A673 (cell line): ENCODE measurements at regions of chr9 and their contacts with region 1.

Region 1: DNA sequence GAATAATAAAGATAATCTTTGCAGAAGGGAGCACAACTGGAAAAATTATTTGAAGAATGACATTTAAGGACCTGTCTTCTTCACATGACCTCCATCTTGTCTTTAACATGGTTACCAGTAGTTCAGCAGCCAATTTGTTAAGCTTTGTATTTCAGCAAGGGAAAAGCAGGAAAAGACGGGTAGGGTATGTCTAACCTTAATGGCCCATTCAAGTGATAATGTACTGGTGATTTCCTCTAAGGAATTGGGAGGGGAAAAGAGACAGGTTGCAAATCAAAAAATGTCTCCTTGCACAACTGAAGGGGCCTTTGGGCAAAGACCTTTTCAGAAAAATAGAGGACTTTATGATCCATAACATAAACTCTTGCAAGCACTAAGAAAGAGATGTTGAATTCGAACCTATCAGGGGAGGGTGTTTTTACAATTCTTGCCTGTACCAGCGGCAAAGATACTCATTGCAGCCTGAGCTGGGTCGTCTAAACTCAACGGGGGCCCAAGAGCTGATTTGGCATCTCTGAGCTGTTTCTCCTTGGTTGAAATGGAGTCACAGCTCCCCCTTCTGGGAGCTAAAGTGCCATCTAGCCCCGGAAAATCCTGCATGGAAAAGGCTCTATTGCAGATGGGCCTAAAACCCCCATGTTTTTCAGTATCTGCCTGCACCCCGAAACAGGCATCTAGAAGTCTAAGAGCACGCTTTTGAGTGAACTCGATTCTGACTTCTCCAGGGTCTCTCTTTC is 3.8 kb downstream of the BRINP1 start:
- DNase-seq: peak; percentile 61
- H3K4me3 ChIP-seq: no peak overlapping the region
- H3K27ac ChIP-seq: no peak overlapping the region
- H3K4me1 ChIP-seq: no peaks in the 10 kb centered on the region
- H3K27me3 ChIP-seq: peaks cover 34% of the 10 kb centered on the region
- CTCF ChIP-seq: peak; percentile 56

Region 2: GRCh38 chr9:117644133-117644931 is 1721.1 kb before region 1 on chr9:
- CTCF ChIA-PET with region 1: no interaction called
- POLR2A ChIA-PET with region 1: no interaction called
- intact Hi-C with region 1: loop called (anchors 2 kb)
- DNase-seq: peak; percentile 80
- H3K4me3 ChIP-seq: no peak overlapping the region
- H3K27ac ChIP-seq: no peak overlapping the region
- H3K4me1 ChIP-seq: no peaks in the 10 kb centered on the region
- H3K27me3 ChIP-seq: peaks cover 55% of the 10 kb centered on the region
- CTCF ChIP-seq: peak; percentile 97

Region 3: GRCh38 chr9:117782931-117783788 is 1582.3 kb before region 1 on chr9:
- CTCF ChIA-PET with region 1: no interaction called
- POLR2A ChIA-PET with region 1: no interaction called
- intact Hi-C with region 1: loop called (anchors 5 kb)
- DNase-seq: peak; percentile 79
- H3K4me3 ChIP-seq: peak overlapping the region; percentile 28
- H3K27ac ChIP-seq: no peak overlapping the region
- H3K4me1 ChIP-seq: no peaks in the 10 kb centered on the region
- H3K27me3 ChIP-seq: no peaks in the 10 kb centered on the region
- CTCF ChIP-seq: peak; percentile 87

Region 4: GRCh38 chr9:118170032-118170955 is 1195.2 kb before region 1 on chr9:
- CTCF ChIA-PET with region 1: no interaction called
- POLR2A ChIA-PET with region 1: no interaction called
- intact Hi-C with region 1: loop called (anchors 5 kb)
- DNase-seq: peak; percentile 62
- H3K4me3 ChIP-seq: no peak overlapping the region
- H3K27ac ChIP-seq: no peak overlapping the region
- H3K4me1 ChIP-seq: no peaks in the 10 kb centered on the region
- H3K27me3 ChIP-seq: no peaks in the 10 kb centered on the region
- CTCF ChIP-seq: peak; percentile 71

Region 5: GRCh38 chr9:118522093-118523028 is 843.1 kb before region 1 on chr9:
- CTCF ChIA-PET with region 1: no interaction called
- POLR2A ChIA-PET with region 1: no interaction called
- intact Hi-C with region 1: loop called (anchors 10 kb)
- DNase-seq: peak; percentile 51
- H3K4me3 ChIP-seq: no peak overlapping the region
- H3K27ac ChIP-seq: no peak overlapping the region
- H3K4me1 ChIP-seq: no peaks in the 10 kb centered on the region
- H3K27me3 ChIP-seq: no peaks in the 10 kb centered on the region
- CTCF ChIP-seq: peak; percentile 70